Activated CD4-positive, alpha-beta T cell treated with anti-CD3 and anti-CD28 coated beads for 36 hours (primary cell): ENCODE measurements at regions of chr13 and their contacts with region 1.

Region 1: GRCh38 chr13:95834134-95834765 is 157.3 kb downstream of the DNAJC3 start:
- DNase-seq: peak; percentile 76
- ATAC-seq: peak; percentile 57
- H3K4me3 Mint-ChIP-seq: no peak overlapping the region
- H3K27ac Mint-ChIP-seq: no peak overlapping the region
- H3K4me1 Mint-ChIP-seq: no peaks in the 10 kb centered on the region
- H3K27me3 Mint-ChIP-seq: peaks cover 23% of the 10 kb centered on the region

Region 2: DNA sequence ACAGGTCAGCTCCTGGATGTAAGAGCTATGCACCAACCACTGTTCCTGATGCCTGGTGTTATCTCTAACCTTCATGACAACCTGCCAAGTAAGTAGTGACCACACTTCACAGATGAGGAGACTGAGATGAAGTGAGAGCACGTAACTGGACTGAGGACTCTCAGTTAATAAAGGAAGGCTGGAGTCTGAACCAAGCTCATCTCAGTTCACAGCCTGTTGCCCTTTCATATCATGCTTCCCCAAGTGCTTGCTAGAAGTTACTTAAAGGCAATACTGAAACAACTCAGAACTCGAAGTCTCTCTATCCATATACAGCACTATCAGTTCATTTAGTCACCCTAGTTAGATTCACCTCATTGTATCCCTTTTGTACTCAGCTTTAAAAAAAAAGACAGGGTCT is 652.7 kb before region 1 on chr13:
- CTCF ChIA-PET with region 1: no interaction called
- POLR2A ChIA-PET with region 1: no interaction called
- intact Hi-C with region 1: loop called in 1 of 2 experiments (anchors 5 kb)
- DNase-seq: no peak
- ATAC-seq: peak; percentile 45
- H3K4me3 Mint-ChIP-seq: no peak overlapping the region
- H3K27ac Mint-ChIP-seq: peak overlapping the region; percentile 14
- H3K4me1 Mint-ChIP-seq: peaks cover 73% of the 10 kb centered on the region
- H3K27me3 Mint-ChIP-seq: no peaks in the 10 kb centered on the region

Region 3: GRCh38 chr13:95494082-95494681 is 340.1 kb before region 1 on chr13:
- CTCF ChIA-PET with region 1: interaction called, 9 read pairs
- POLR2A ChIA-PET with region 1: no interaction called
- intact Hi-C with region 1: loop called (anchors 2 kb)
- DNase-seq: no peak
- ATAC-seq: no peak
- H3K4me3 Mint-ChIP-seq: no peak overlapping the region
- H3K27ac Mint-ChIP-seq: no peak overlapping the region
- H3K4me1 Mint-ChIP-seq: no peaks in the 10 kb centered on the region
- H3K27me3 Mint-ChIP-seq: peaks cover 11% of the 10 kb centered on the region

Region 4: GRCh38 chr13:95579303-95579702 is 254.9 kb before region 1 on chr13:
- CTCF ChIA-PET with region 1: no interaction called
- POLR2A ChIA-PET with region 1: no interaction called
- intact Hi-C with region 1: no loop called
- DNase-seq: no peak
- ATAC-seq: peak; percentile 85
- H3K4me3 Mint-ChIP-seq: no peak overlapping the region
- H3K27ac Mint-ChIP-seq: no peak overlapping the region
- H3K4me1 Mint-ChIP-seq: peaks cover 8% of the 10 kb centered on the region
- H3K27me3 Mint-ChIP-seq: peaks cover 4% of the 10 kb centered on the region

Region 5: GRCh38 chr13:95624020-95624419 is 210.2 kb before region 1 on chr13:
- CTCF ChIA-PET with region 1: interaction called, 88 read pairs
- POLR2A ChIA-PET with region 1: no interaction called
- intact Hi-C with region 1: loop called (anchors 1 kb)
- DNase-seq: peak; percentile 32
- ATAC-seq: peak; percentile 49
- H3K4me3 Mint-ChIP-seq: no peak overlapping the region
- H3K27ac Mint-ChIP-seq: no peak overlapping the region
- H3K4me1 Mint-ChIP-seq: no peaks in the 10 kb centered on the region
- H3K27me3 Mint-ChIP-seq: peaks cover 9% of the 10 kb centered on the region

Region 6: GRCh38 chr13:95813139-95813538 is 21.1 kb before region 1 on chr13:
- CTCF ChIA-PET with region 1: interaction called, 13 read pairs
- POLR2A ChIA-PET with region 1: no interaction called
- intact Hi-C with region 1: no loop called
- DNase-seq: no peak
- ATAC-seq: no peak
- H3K4me3 Mint-ChIP-seq: no peak overlapping the region
- H3K27ac Mint-ChIP-seq: no peak overlapping the region
- H3K4me1 Mint-ChIP-seq: no peaks in the 10 kb centered on the region
- H3K27me3 Mint-ChIP-seq: peaks cover 16% of the 10 kb centered on the region